MCF 10A (cell line): ENCODE measurements at regions of chr2 and their contacts with region 1.

Region 1: GRCh38 chr2:120949027-120949956 is 213.6 kb downstream of the GLI2 start:
- DNase-seq: peak; percentile 47
- H3K4me3 Mint-ChIP-seq: no peak overlapping the region
- H3K27ac Mint-ChIP-seq: no peak overlapping the region
- H3K4me1 Mint-ChIP-seq: no peaks in the 10 kb centered on the region
- H3K27me3 Mint-ChIP-seq: no peaks in the 10 kb centered on the region
- CTCF ChIP-seq: peak; percentile 29

Region 2: GRCh38 chr2:120735746-120736170 is 213.5 kb before region 1 on chr2 and contains the start of gene GLI2:
- CTCF ChIA-PET with region 1: no interaction called
- POLR2A ChIA-PET with region 1: no interaction called
- intact Hi-C with region 1: loop called (anchors 5 kb)
- DNase-seq: peak; percentile 70
- H3K4me3 Mint-ChIP-seq: peak within 1 kb of the TSS; percentile 79
- H3K27ac Mint-ChIP-seq: no peak within 1 kb of the TSS
- H3K4me1 Mint-ChIP-seq: no peaks in the 10 kb centered on the region
- H3K27me3 Mint-ChIP-seq: peaks cover 41% of the 10 kb centered on the region
- CTCF ChIP-seq: peak; percentile 79
- total RNA-seq, gene GLI2: 0.61 and 0.74 TPM in 2 replicates

Region 3: GRCh38 chr2:120847700-120848321 is 101.5 kb before region 1 on chr2:
- CTCF ChIA-PET with region 1: no interaction called
- POLR2A ChIA-PET with region 1: no interaction called
- intact Hi-C with region 1: no loop called
- DNase-seq: no peak
- H3K4me3 Mint-ChIP-seq: no peak overlapping the region
- H3K27ac Mint-ChIP-seq: no peak overlapping the region
- H3K4me1 Mint-ChIP-seq: no peaks in the 10 kb centered on the region
- H3K27me3 Mint-ChIP-seq: no peaks in the 10 kb centered on the region
- CTCF ChIP-seq: no peak